Activated naive CD4-positive, alpha-beta T cell treated with anti-CD3 and anti-CD28 coated beads for 36 hours (primary cell): ENCODE measurements at regions of chr14 and their contacts with region 1.

Region 1: DNA sequence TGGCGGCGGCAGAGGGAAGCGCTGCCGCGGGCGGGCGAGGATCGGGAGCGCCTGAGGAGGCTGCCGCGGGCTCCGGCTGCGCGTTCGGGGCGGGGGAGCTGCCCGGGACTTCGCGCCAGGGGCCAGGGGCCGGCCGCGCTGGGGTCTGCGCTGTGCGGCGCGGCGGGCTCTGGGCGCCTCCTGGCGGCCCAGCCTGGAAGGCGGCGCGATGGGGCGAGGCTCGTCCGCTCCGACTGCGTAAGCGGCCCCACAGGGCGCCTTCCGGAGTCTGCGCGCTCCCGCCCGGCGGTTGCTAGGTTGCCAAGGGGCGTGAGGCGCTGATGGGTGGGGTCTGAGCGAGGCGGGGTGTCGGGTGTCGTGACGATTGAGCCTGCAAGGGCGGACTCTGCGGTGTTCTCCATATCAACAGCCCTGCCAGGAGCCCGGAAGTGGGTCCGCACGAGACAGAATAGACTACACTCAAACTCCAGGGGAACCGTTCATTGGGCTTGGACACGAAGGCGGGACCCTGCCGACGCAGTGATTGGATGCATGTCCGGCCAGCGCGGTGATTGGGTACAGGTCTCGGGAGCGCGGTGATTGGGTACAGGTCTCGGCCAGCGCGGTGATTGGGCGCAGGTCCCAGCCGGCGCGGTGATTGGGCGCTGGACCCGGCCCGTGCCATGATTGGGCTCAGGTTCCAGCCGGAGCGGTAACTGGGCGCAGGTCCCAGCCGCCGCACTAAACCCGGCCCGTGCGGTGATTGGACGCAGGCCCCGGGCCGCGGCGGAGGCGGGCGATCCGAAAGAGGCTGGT is at the start of gene TEDC1:
- DNase-seq: peak; percentile 100
- H3K4me3 Mint-ChIP-seq: peak within 1 kb of the TSS; percentile 83
- H3K27ac Mint-ChIP-seq: peak within 1 kb of the TSS; percentile 85
- H3K4me1 Mint-ChIP-seq: peaks cover 31% of the 10 kb centered on the region
- H3K27me3 Mint-ChIP-seq: no peaks in the 10 kb centered on the region
- total RNA-seq, gene TEDC1: 27.8 to 28.6 TPM

Region 2: DNA sequence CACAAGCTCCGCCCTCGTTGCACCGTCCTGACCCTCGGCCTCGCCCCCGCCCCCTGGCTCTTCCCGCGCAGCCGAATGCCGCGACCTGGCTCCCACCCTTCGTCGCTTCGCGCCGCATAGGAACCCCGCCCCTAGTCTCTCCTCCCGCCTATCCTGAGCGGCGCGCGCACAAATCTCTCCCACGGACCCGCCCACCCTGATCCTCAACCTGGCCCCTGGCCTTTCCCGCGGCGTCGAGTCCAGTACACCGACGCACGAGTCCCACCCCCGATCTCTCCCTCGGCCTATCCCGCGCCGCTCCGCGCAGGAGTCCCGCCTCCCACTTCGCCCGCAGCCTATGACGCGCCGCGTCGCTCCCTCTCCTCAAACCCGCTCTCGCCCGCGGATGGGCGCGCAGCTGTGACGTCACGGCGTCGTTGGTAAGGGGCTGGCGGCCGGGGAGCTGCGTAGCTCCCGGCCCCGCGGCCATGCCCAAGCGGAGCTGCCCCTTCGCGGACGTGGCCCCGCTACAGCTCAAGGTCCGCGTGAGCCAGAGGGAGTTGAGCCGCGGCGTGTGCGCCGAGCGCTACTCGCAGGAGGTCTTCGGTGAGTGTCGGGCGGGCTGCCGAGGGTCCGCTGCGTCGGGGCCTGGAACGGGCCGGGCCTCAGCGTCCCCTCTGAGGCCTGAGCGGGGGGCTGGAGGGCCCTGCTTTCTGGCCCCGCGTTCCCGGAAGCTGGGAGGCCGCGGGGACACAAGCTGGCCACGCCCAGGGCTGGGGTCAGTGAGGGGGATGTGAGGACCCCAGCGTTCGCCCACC is 737.8 kb before region 1 on chr14 and contains the start of gene SIVA1:
- CTCF ChIA-PET with region 1: no interaction called
- intact Hi-C with region 1: loop called (anchors 1 kb)
- DNase-seq: peak; percentile 100
- H3K4me3 Mint-ChIP-seq: peak within 1 kb of the TSS; percentile 91
- H3K27ac Mint-ChIP-seq: peak within 1 kb of the TSS; percentile 88
- H3K4me1 Mint-ChIP-seq: peaks cover 32% of the 10 kb centered on the region
- H3K27me3 Mint-ChIP-seq: no peaks in the 10 kb centered on the region
- total RNA-seq, gene SIVA1: 86.1 to 92.7 TPM

Region 3: DNA sequence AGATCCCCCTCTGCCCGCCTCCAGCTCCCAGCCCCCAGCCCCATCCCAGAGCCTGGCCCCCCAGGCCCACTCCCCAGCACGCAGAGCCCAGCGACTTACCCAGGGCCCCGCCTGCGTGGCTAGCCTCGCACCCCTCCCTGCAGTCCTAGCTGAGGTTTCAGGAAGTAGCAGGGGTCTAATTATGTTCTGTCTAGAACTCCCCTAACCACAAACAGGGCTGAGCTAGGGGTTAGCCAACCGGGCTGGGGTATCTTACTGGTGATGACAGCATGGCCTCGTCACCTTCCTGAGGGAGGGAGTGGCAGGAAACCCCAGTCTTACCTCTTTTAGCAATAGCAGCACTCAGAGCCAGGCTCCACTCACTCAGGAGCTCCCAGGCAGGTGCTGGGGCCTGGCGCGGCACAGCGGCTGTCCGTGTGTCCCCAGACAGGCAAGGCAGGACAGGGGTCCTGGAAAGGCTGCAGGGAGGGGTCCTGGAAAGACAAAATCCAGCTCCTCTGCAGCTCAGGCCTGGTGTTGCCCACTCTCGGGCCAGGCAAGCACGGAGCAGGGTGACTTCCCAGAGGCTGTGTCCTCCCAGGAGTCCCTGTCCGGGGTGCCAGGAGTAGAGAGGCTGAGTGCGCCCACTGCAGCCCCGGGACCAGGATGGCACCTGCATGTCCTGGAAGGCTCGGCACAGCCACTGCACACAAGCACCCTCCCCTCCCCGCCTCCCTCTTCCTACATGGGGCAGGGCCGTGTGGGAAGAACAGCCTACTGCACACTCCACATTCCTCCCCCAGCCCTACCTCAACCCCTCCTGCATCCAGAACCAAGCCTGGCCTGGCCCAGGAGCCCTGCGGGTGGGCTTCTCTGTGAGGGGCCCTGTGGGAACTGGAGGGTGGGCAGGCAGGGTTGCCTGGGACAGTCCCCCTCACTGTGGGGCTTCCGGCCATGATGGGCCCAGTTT is 425.2 kb before region 1 on chr14 and contains the start of gene GPR132:
- CTCF ChIA-PET with region 1: no interaction called
- intact Hi-C with region 1: loop called (anchors 2 kb)
- DNase-seq: peak; percentile 97
- H3K4me3 Mint-ChIP-seq: peak within 1 kb of the TSS; percentile 84
- H3K27ac Mint-ChIP-seq: peak within 1 kb of the TSS; percentile 96
- H3K4me1 Mint-ChIP-seq: peaks cover 81% of the 10 kb centered on the region
- H3K27me3 Mint-ChIP-seq: no peaks in the 10 kb centered on the region
- total RNA-seq, gene GPR132: 11.3 to 15.3 TPM

Region 4: GRCh38 chr14:105203057-105203531 is 287.7 kb before region 1 on chr14:
- CTCF ChIA-PET with region 1: no interaction called
- intact Hi-C with region 1: loop called (anchors 2 kb)
- DNase-seq: peak; percentile 70
- H3K4me3 Mint-ChIP-seq: no peak overlapping the region
- H3K27ac Mint-ChIP-seq: no peak overlapping the region
- H3K4me1 Mint-ChIP-seq: peaks cover 6% of the 10 kb centered on the region
- H3K27me3 Mint-ChIP-seq: peaks cover 17% of the 10 kb centered on the region

Region 5: GRCh38 chr14:105398044-105398725 is 92.6 kb before region 1 on chr14 and contains the start of gene TEX22:
- CTCF ChIA-PET with region 1: interaction called, 10 read pairs
- intact Hi-C with region 1: loop called (anchors 1 kb)
- DNase-seq: peak; percentile 90
- H3K4me3 Mint-ChIP-seq: peak within 1 kb of the TSS; percentile 85
- H3K27ac Mint-ChIP-seq: peak within 1 kb of the TSS; percentile 83
- H3K4me1 Mint-ChIP-seq: peaks cover 26% of the 10 kb centered on the region
- H3K27me3 Mint-ChIP-seq: no peaks in the 10 kb centered on the region
- total RNA-seq, gene TEX22: 2.0 to 2.6 TPM

Region 6: GRCh38 chr14:105475881-105476855 is 14.6 kb before region 1 on chr14:
- CTCF ChIA-PET with region 1: interaction called, 43 read pairs
- intact Hi-C with region 1: loop called (anchors 1 kb)
- DNase-seq: no peak
- H3K4me3 Mint-ChIP-seq: peak overlapping the region; percentile 32
- H3K27ac Mint-ChIP-seq: no peak overlapping the region
- H3K4me1 Mint-ChIP-seq: peaks cover 33% of the 10 kb centered on the region
- H3K27me3 Mint-ChIP-seq: peaks cover 22% of the 10 kb centered on the region